ENCODE measurements at regions of chr6 and their contacts with region 1.

Region 1: GRCh38 chr6:25278914-25279747 is at the start of gene CARMIL1:
- DNase-seq: peak; percentile 86
- ATAC-seq: peak; percentile 68
- H3K4me3 Mint-ChIP-seq: peak within 1 kb of the TSS; percentile 93
- H3K27ac Mint-ChIP-seq: peak within 1 kb of the TSS; percentile 93
- H3K4me1 Mint-ChIP-seq: peaks cover 44% of the 10 kb centered on the region
- H3K27me3 Mint-ChIP-seq: no peaks in the 10 kb centered on the region
- CTCF ChIP-seq: no peak
- total RNA-seq, gene CARMIL1: 35.1 to 37.6 TPM (median 36.2 TPM) in 3 replicates

Region 2: DNA sequence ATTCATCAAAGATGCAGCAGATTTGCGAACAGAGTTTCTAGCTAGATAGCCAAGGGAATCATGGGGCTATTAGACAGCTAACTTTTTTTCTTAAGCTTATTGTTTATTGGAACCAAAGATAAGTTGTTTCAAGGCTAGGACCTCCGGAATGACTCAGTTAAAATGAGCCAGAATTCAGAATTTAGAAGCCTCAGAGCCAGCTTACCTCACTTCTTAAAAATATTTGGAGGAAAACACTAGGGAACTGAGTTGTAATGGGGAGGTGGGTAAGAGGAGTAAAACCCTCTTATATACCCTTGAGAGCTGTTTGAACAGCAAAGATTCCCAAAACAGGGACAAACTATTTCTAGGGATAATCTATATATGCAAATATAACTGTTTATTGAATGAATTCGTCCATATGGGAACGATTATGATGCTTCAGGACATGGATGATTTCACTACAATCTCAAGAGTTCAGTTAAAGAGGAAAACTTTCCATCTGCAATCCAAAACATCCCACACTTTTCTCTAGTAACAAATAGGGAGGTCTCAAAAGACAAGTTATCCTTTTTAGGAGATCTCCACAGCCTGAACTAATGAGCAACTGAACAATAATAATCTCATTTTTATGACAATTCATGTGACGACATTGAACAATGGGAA is 12.6 kb before region 1 on chr6:
- CTCF ChIA-PET with region 1: interaction called, 41 read pairs
- POLR2A ChIA-PET with region 1: interaction called, 3 read pairs
- DNase-seq: no peak
- ATAC-seq: no peak
- H3K4me3 Mint-ChIP-seq: no peak overlapping the region
- H3K27ac Mint-ChIP-seq: no peak overlapping the region
- H3K4me1 Mint-ChIP-seq: peaks cover 11% of the 10 kb centered on the region
- H3K27me3 Mint-ChIP-seq: no peaks in the 10 kb centered on the region; the same call in 1 of the 2 replicates
- CTCF ChIP-seq: no peak

Region 3: GRCh38 chr6:25359191-25359861 is 80.2 kb after region 1 on chr6:
- CTCF ChIA-PET with region 1: interaction called, 10 read pairs
- POLR2A ChIA-PET with region 1: no interaction called
- DNase-seq: no peak
- ATAC-seq: peak; percentile 59
- H3K4me3 Mint-ChIP-seq: no peak overlapping the region
- H3K27ac Mint-ChIP-seq: peak overlapping the region; percentile 76
- H3K4me1 Mint-ChIP-seq: peaks cover 45% of the 10 kb centered on the region
- H3K27me3 Mint-ChIP-seq: no peaks in the 10 kb centered on the region
- CTCF ChIP-seq: no peak

Region 4: DNA sequence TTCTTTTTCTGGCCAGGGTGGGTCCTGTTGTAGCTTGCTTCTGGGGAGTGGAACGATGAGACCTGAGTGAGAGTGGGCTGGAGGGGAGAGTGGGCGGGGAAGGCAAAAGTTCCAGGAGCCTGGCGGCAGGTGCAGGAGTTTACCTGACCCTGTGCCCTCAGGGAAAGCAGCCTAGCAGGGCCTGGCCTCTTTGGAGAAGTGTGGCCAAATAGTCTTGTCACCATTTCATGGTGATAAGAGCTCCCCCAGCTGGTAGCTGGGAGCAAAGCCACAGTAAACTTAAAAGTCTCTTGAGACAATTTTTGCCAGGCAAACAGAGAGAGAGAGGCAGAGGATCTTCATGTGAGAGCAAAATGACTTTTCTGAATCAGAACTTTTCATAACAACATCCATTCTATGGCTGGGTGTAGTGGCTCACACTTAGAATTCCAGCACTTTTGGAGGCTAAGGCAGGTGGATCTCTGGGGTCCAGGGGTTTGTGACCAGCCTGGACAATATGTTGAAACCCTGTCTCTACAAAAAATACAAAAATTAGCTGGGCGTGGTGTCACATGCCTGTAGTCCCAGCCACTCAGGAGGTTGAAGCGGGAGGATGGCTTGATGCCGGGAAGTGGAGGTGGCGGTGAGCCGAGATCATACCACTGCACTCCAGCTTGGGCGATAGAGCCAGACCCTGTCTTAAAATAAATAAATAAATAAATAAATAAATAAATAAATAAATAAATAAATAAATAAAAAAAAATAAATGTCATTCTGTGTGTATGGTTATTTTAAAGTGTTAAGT is 211.1 kb after region 1 on chr6:
- CTCF ChIA-PET with region 1: interaction called, 40 read pairs
- POLR2A ChIA-PET with region 1: interaction called, 3 read pairs
- DNase-seq: peak; percentile 86
- ATAC-seq: peak; percentile 100
- H3K4me3 Mint-ChIP-seq: no peak overlapping the region
- H3K27ac Mint-ChIP-seq: peak overlapping the region; percentile 73
- H3K4me1 Mint-ChIP-seq: peaks cover 16% of the 10 kb centered on the region
- H3K27me3 Mint-ChIP-seq: no peaks in the 10 kb centered on the region
- CTCF ChIP-seq: peak; percentile 64

Measured in WTC11 (cell line).